Right lobe of liver (tissue), 6 donors: ENCODE measurements at regions of chr4 and their contacts with region 1.

Region 1: DNA sequence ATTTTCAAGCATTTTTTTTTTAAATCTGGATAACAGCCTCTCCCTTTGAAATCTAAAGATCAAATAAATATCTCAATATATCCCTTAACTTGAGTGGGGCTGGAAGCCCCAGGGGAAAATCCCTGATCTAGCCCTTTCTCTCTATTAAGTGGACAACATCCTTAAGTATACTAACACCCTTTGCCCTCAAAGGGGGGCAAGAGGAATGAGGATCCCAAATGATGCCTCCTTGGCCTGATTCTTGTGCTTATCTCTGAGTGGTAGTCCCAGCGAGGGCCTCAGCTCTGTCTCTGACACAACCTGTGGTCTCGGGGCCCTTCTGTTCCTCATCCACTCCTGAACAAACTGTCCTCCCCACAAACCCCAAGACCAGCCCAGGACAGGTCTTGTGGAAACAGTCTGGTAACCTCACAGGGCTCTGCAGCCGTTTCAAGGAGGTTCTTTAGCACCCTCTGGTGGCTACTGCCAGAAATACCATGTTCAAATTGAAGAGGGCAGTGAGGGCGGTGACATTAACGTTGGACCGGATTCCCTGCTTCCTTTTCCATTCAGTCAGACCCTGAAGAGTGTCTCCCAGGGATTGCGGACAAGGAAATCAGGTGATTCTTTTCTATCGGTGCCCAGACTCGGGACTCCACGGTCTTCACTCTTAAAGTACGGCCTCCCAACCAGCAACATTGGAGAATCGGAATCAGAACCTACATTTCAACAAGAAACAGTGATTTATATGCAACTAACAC is 12.9 kb downstream of the CXCL13 start:
- DNase-seq: peak in 2 of 3 donors; percentile 36 to 81
- ATAC-seq: peak; percentile 94 to 97 (median 96)
- H3K4me3 ChIP-seq: no peak overlapping the region
- H3K27ac ChIP-seq: peak overlapping the region in 2 of 3 donors; percentile 53 to 61
- H3K4me1 ChIP-seq: peaks cover 0 to 19% (median 4%) of the 10 kb centered on the region in 4 donors
- H3K27me3 ChIP-seq: no peaks in the 10 kb centered on the region
- CTCF ChIP-seq: peak; percentile 81 to 85 (median 82)
- POLR2A ChIP-seq: no peak

Region 2: DNA sequence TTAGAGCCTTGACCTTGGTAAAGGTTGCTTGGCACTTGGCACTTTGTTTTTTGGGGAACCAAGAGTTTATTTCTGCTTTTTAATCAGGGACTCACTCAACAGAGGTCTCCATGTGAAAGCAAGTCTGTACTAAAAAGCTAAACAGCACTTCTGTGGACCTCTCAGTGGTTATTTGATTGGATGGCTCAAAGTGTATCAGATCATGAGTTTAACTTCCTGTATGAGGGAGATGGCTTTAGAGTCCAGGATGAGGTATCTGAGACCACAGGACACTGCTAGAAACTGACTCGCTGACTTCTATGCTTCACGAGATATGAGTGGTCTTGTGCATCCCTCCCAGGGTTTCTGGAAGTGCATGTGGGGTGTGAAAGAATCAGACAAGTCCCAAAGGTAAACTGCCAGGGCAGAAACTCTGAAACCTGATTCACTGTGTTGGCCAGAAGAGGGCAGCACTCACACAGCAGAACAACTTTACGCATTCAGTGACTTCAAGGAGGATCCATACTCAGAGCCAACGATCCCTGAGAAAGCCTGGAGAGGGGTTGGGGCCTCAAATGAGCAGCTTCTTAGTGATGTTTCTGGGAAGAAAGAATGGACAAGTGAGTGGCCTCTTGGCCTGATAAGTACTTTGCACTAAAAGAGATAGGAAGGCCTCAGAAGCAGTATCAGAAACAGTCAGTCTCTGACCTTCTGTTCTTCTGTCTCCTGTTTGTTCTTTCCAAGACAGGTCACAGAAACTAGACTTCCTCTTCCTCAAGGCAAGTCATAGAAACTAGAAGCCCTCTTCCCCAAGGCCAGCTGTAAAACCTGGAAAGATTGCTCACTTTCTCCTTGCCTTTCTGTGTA is 233.2 kb before region 1 on chr4:
- intact Hi-C with region 1: loop called in 1 of 2 experiments (anchors 10 kb)
- DNase-seq: peak; percentile 38 to 74 (median 56)
- ATAC-seq: peak; percentile 91 to 95 (median 92)
- H3K4me3 ChIP-seq: no peak overlapping the region
- H3K27ac ChIP-seq: no peak overlapping the region
- H3K4me1 ChIP-seq: no peaks in the 10 kb centered on the region
- H3K27me3 ChIP-seq: no peaks in the 10 kb centered on the region
- CTCF ChIP-seq: peak; percentile 77 to 87 (median 78)
- POLR2A ChIP-seq: no peak

Region 3: GRCh38 chr4:77465271-77465670 is 153.3 kb before region 1 on chr4:
- intact Hi-C with region 1: loop called (anchors 10 kb)
- DNase-seq: peak in 2 of 3 donors; percentile 48 to 64
- ATAC-seq: peak; percentile 89 to 97 (median 94)
- H3K4me3 ChIP-seq: no peak overlapping the region
- H3K27ac ChIP-seq: no peak overlapping the region
- H3K4me1 ChIP-seq: no peaks in the 10 kb centered on the region
- H3K27me3 ChIP-seq: no peaks in the 10 kb centered on the region
- CTCF ChIP-seq: peak; percentile 55 to 73 (median 64)
- POLR2A ChIP-seq: no peak

Region 4: GRCh38 chr4:77473509-77473908 is 145.0 kb before region 1 on chr4:
- intact Hi-C with region 1: loop called (anchors 10 kb)
- DNase-seq: no peak
- ATAC-seq: peak; percentile 51 to 73 (median 60)
- H3K4me3 ChIP-seq: no peak overlapping the region
- H3K27ac ChIP-seq: no peak overlapping the region
- H3K4me1 ChIP-seq: no peaks in the 10 kb centered on the region
- H3K27me3 ChIP-seq: no peaks in the 10 kb centered on the region
- CTCF ChIP-seq: peak; percentile 32 to 50 (median 33)
- POLR2A ChIP-seq: no peak